ENCODE measurements at regions of chr4 and their contacts with region 1.

Region 1: GRCh38 chr4:185471235-185472102 is at the start of gene CCDC110:
- DNase-seq: peak; percentile 95
- H3K4me3 ChIP-seq: peak within 1 kb of the TSS; percentile 60
- H3K27ac ChIP-seq: no peak within 1 kb of the TSS
- H3K4me1 ChIP-seq: no peaks in the 10 kb centered on the region
- H3K27me3 ChIP-seq: peaks cover 33% of the 10 kb centered on the region
- CTCF ChIP-seq: peak; percentile 48
- total RNA-seq, gene CCDC110: 0.50 TPM in 1 of 2 replicates, not detected in the other

Region 2: GRCh38 chr4:185597532-185598188 is 126.2 kb after region 1 on chr4:
- CTCF ChIA-PET with region 1: interaction called, 5 read pairs
- POLR2A ChIA-PET with region 1: no interaction called
- intact Hi-C with region 1: loop called (anchors 2 kb)
- DNase-seq: peak; percentile 72
- H3K4me3 ChIP-seq: no peak overlapping the region
- H3K27ac ChIP-seq: no peak overlapping the region
- H3K4me1 ChIP-seq: no peaks in the 10 kb centered on the region
- H3K27me3 ChIP-seq: peaks cover 26% of the 10 kb centered on the region
- CTCF ChIP-seq: peak; percentile 99

Region 3: DNA sequence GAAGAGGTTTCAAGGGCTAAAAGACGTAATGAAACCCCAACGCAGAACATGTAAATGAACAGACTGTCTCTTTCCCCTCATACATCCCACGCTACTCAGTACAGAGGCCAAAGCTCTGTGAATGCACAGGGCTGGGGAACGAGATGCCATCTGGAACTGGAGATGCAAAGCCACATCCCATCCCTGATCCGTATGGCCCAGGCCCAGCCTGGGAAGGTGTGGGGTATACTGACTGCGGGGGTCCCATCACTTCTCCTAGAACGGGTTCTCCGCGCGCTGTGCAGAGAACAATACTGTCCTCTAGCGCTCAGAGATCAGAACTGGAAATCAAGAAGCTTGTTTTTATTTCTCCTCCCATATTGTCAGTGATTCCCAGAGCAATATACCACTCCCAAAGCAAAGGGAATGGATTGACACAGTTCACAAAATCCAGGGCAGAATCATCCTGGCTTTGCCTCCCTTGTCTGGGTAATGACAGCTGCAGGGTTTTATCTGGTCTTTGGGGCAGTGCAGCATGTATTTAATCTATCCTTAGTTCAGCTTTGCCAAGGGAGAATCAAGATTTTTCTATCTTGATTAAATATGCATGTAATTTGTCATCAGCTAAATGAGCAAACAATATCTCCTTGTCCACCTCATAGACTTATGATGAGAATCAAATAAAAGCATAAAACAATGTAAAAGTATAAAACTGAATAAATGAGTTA is 550.1 kb after region 1 on chr4:
- CTCF ChIA-PET with region 1: no interaction called
- POLR2A ChIA-PET with region 1: no interaction called
- intact Hi-C with region 1: loop called (anchors 10 kb)
- DNase-seq: peak; percentile 52
- H3K4me3 ChIP-seq: no peak overlapping the region
- H3K27ac ChIP-seq: no peak overlapping the region
- H3K4me1 ChIP-seq: no peaks in the 10 kb centered on the region
- H3K27me3 ChIP-seq: no peaks in the 10 kb centered on the region
- CTCF ChIP-seq: peak; percentile 73

Measured in A673 (cell line).